SK-N-SH (cell line): ENCODE measurements at regions of chr9 and their contacts with region 1.

Region 1: DNA sequence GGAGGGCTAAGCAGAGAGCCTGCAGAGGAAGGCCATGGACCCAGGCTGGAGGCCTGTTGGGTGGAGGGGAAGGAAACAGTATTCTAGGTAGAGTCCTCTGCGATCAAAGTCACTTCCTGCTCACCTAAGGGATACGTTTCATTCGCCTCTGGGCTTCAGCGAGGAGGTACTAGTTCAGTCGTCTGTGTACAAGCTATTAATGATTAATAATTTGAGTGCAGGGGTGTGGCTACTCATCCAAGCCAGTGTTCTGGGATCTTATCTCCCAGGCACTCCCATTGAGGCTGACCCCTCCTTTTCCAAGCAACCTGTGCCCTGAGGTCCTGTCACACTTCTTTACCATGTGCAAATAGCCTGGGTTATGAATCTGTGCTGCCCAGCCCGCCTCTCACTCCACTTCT is 25.2 kb downstream of the RALGPS1 start:
- DNase-seq: no peak
- H3K4me3 ChIP-seq: no peak overlapping the region
- H3K27ac ChIP-seq: no peak overlapping the region
- H3K4me1 ChIP-seq: peaks cover 0 to 4% of the 10 kb centered on the region in 2 experiments; a peak in 2 of 4 replicates
- H3K27me3 ChIP-seq: no peaks in the 10 kb centered on the region
- CTCF ChIP-seq: no peak
- EP300 ChIP-seq: no peak
- RAD21 ChIP-seq: no peak

Region 2: GRCh38 chr9:126914458-126915280 is 25.2 kb before region 1 on chr9 and contains the start of gene RALGPS1:
- CTCF ChIA-PET with region 1: interaction called, 12 read pairs
- POLR2A ChIA-PET with region 1: no interaction called
- DNase-seq: peak; percentile 99
- H3K4me3 ChIP-seq: peak within 1 kb of the TSS; percentile 54 to 59
- H3K27ac ChIP-seq: peak within 1 kb of the TSS in 1 of 2 experiments; percentile 67; a peak in 2 of 4 replicates
- H3K4me1 ChIP-seq: peaks cover 0 to 9% of the 10 kb centered on the region in 2 experiments; a peak in 1 of 4 replicates
- H3K27me3 ChIP-seq: no peaks in the 10 kb centered on the region; the same call in 1 of the 2 replicates
- CTCF ChIP-seq: no peak
- EP300 ChIP-seq: no peak
- RAD21 ChIP-seq: no peak
- polyA plus RNA-seq, gene RALGPS1: 3.9 and 4.1 TPM in 2 replicates

Region 3: GRCh38 chr9:126956917-126957686 is 17.3 kb after region 1 on chr9:
- CTCF ChIA-PET with region 1: interaction called, 24 read pairs
- POLR2A ChIA-PET with region 1: no interaction called
- DNase-seq: no peak
- H3K4me3 ChIP-seq: no peak overlapping the region
- H3K27ac ChIP-seq: peak overlapping the region; percentile 51 to 88
- H3K4me1 ChIP-seq: peaks cover 7 to 12% of the 10 kb centered on the region in 2 experiments; a peak in 3 of 4 replicates
- H3K27me3 ChIP-seq: no peaks in the 10 kb centered on the region
- CTCF ChIP-seq: no peak
- EP300 ChIP-seq: no peak
- RAD21 ChIP-seq: no peak

Region 4: DNA sequence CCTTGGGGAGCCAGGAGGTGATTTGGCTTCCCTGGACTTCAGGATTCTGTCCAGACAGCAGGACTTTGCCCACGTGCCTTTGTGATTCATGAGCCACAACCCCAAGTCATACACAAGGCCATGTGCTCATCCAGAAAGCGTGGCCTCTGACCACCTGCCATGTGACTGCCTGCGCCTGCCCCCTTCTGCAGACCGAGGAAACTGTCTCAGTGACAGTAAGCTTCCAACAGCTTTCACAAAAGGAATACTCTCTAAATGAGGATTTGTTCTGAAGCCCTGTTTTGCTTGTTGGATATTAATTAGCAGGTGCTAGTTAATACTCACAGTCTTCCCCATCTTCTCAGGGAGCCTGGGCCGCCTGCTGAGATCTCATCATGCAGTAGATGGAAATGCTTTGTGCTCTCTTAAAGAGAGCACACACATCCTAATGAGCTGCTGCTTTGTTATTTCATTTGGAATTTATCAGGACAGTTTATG is 219.5 kb after region 1 on chr9:
- CTCF ChIA-PET with region 1: interaction called, 12 read pairs
- POLR2A ChIA-PET with region 1: no interaction called
- DNase-seq: peak; percentile 41
- H3K4me3 ChIP-seq: no peak overlapping the region
- H3K27ac ChIP-seq: peak overlapping the region; percentile 28 to 29; a peak in 3 of 4 replicates
- H3K4me1 ChIP-seq: peaks cover 35 to 40% of the 10 kb centered on the region in 2 experiments; a peak in 3 of 4 replicates
- H3K27me3 ChIP-seq: no peaks in the 10 kb centered on the region
- CTCF ChIP-seq: peak; percentile 16; the same call in 1 of the 2 replicates
- EP300 ChIP-seq: peak in 1 of 2 experiments; percentile 28; a peak in 1 of 4 replicates
- RAD21 ChIP-seq: peak; percentile 39

Region 5: DNA sequence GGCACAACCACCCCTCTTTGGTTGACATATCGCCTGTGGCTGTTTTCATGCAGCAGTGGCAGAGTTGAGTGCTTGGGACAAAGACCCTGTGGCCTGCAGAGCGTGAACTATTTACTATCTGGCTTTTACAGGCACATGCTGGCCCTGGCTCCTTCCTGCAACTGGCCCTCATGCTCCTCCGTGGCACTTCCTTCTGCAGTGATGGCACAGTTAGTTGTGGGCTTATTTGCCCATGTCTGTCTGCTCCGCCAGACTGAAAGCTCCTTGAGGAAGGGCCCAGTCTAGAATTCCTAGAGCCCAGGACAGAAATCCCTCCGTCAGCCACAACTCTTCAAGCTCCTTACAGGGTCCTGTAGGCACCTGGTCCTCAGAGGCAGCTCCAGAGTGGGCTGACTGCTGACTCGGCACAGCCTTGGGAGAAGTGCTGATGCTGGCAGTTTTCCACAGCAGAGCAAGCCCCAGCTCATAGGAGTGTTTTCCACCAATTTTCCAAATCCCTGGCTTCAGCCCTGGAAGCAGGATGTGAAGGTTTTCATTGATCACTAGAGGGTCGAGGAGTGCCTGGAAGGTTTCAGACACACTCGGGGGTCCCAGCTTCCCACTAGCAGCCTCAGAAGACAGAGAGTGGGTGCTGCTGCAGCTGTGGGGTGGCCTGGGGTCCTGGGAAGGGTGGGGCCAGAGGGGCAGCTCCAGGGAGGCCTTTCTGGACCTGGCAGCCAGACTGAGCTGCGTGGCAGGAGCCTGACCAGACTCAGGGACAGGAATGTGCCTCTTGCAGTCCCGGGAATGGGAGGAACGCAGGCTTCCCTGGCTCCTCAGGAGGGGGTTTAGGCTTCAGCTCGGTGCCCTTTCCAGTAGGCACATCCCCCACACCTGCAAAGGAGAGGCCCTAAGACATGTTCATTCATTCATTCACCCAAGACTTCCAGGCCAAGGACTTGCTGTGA is 239.1 kb after region 1 on chr9:
- CTCF ChIA-PET with region 1: interaction called, 11 read pairs
- POLR2A ChIA-PET with region 1: no interaction called
- DNase-seq: no peak
- H3K4me3 ChIP-seq: no peak overlapping the region
- H3K27ac ChIP-seq: no peak overlapping the region
- H3K4me1 ChIP-seq: peaks cover 0 to 12% of the 10 kb centered on the region in 2 experiments; a peak in 1 of 4 replicates
- H3K27me3 ChIP-seq: no peaks in the 10 kb centered on the region
- CTCF ChIP-seq: no peak
- EP300 ChIP-seq: no peak
- RAD21 ChIP-seq: no peak

Region 6: GRCh38 chr9:127214421-127215267 is 274.8 kb after region 1 on chr9:
- CTCF ChIA-PET with region 1: interaction called, 61 read pairs
- POLR2A ChIA-PET with region 1: no interaction called
- DNase-seq: peak; percentile 82
- H3K4me3 ChIP-seq: no peak overlapping the region; a peak in 1 of 4 replicates
- H3K27ac ChIP-seq: no peak overlapping the region
- H3K4me1 ChIP-seq: peaks cover 0 to 5% of the 10 kb centered on the region in 2 experiments; a peak in 1 of 4 replicates
- H3K27me3 ChIP-seq: no peaks in the 10 kb centered on the region
- CTCF ChIP-seq: peak; percentile 85
- EP300 ChIP-seq: no peak
- RAD21 ChIP-seq: peak; percentile 83

Region 7: GRCh38 chr9:127347831-127348779 is 408.3 kb after region 1 on chr9:
- CTCF ChIA-PET with region 1: interaction called, 14 read pairs
- POLR2A ChIA-PET with region 1: no interaction called
- DNase-seq: peak; percentile 55
- H3K4me3 ChIP-seq: no peak overlapping the region
- H3K27ac ChIP-seq: no peak overlapping the region
- H3K4me1 ChIP-seq: peaks cover 0 to 5% of the 10 kb centered on the region in 2 experiments; a peak in 2 of 4 replicates
- H3K27me3 ChIP-seq: no peaks in the 10 kb centered on the region
- CTCF ChIP-seq: peak; percentile 68
- EP300 ChIP-seq: no peak
- RAD21 ChIP-seq: peak; percentile 85